ENCODE measurements at regions of chr2 and their contacts with region 1.

Region 1: GRCh38 chr2:30115141-30115980 is 31.4 kb upstream of the YPEL5 start:
- DNase-seq: peak; percentile 84
- ATAC-seq: peak; percentile 90

Region 2: GRCh38 chr2:29718287-29718686 is 397.1 kb before region 1 on chr2:
- intact Hi-C with region 1: no loop called
- DNase-seq: no peak
- ATAC-seq: no peak

Region 3: DNA sequence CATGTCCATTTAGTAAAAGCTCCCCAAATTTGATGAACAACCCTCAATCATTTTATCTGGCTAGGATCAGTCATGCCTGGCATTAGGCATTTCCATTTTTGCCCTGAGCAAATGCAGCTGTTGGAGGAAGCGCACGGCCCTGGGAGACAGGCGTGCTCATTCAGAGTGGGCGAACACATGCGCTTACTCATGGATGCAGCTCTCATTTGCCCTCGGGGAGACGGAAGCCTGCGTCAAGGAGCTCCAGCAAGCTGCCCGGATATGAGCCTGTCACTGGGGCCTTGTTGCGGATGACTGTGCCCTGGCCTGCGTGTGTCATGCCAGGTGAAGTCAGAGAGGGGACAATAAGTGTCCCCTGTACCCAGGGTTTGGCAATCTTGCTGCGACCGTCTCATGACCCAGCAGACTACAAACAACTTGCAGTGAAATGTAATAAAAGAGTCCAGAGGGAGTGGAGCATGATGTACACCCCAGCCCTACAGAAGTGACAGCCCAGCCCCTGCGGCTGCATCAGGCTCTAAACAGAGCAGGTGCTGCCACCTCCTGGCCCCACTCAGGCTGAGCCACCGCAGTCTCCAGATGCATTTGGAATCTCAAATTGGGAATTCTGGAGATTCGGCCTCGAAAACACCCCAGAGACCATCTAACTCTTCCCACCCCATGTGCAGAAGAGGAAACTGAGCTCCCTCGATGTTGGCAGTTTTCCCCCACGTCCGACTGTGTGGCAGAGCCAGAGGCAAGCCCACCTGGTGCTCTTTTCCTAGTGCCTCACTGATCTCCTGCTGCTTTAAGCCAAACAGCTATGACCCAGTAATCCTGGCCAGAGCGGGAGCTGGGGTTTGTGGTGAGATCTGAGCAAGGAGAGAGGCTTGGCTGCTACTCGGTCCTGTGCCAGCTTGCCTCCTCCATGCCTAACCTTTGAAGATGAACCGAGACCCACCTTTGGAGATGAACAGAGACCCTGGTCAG is 89.0 kb before region 1 on chr2:
- intact Hi-C with region 1: no loop called
- DNase-seq: peak; percentile 69
- ATAC-seq: peak; percentile 75

Region 4: DNA sequence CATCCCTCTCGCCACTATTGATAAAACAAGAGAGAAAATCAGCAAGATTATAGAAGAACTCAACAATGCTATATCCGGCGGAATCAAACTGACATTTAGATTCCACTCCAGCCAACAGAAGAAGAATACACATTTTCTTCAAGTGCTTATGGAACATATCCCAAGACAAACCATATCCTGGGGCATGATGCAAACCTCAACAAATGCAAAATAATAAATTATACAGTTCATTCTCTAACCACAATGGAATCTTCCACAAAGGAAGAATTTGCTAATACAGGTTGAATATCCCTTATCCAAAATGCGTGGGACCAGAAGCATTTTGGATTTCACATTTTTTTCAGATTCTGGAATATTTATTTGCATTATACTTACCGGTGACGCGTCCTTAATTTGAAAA is 20.0 kb before region 1 on chr2:
- intact Hi-C with region 1: loop called (anchors 2 kb)
- DNase-seq: no peak
- ATAC-seq: no peak

Region 5: GRCh38 chr2:30622452-30622851 is 507.1 kb after region 1 on chr2:
- intact Hi-C with region 1: no loop called
- DNase-seq: no peak
- ATAC-seq: no peak

Measured in Right ventricle myocardium superior (tissue), 1 donor.